A549 (cell line): ENCODE measurements at regions of chr11 and their contacts with region 1.

Region 1: DNA sequence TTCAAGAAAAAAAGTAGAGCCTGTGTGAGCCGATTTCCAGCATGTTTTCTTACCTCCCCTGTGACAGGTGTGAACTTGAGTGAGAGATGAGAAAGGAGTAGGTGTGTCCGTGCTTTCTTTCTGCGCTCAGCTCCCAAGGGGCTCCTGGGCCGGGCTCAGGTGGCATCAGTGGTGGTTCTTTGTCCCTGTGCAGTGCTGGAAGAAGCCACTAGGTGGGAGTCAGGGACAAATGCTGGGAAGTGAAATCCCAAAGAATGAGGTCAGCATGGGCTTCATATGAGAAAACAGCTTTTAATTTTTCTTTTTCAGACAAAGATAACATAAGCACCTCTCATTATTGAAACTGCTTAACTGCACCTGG is 57.8 kb downstream of the PPFIBP2 start:
- DNase-seq: peak; percentile 74 to 79
- ATAC-seq: peak; percentile 75 to 83
- H3K4me3 ChIP-seq: no peak overlapping the region
- H3K27ac ChIP-seq: peak overlapping the region; percentile 85 to 88
- H3K4me1 ChIP-seq: peaks cover 56% of the 10 kb centered on the region
- CTCF ChIP-seq: peak; percentile 98
- EP300 ChIP-seq: no peak
- POLR2A ChIP-seq: no peak
- RAD21 ChIP-seq: peak; percentile 98 to 99

Region 2: DNA sequence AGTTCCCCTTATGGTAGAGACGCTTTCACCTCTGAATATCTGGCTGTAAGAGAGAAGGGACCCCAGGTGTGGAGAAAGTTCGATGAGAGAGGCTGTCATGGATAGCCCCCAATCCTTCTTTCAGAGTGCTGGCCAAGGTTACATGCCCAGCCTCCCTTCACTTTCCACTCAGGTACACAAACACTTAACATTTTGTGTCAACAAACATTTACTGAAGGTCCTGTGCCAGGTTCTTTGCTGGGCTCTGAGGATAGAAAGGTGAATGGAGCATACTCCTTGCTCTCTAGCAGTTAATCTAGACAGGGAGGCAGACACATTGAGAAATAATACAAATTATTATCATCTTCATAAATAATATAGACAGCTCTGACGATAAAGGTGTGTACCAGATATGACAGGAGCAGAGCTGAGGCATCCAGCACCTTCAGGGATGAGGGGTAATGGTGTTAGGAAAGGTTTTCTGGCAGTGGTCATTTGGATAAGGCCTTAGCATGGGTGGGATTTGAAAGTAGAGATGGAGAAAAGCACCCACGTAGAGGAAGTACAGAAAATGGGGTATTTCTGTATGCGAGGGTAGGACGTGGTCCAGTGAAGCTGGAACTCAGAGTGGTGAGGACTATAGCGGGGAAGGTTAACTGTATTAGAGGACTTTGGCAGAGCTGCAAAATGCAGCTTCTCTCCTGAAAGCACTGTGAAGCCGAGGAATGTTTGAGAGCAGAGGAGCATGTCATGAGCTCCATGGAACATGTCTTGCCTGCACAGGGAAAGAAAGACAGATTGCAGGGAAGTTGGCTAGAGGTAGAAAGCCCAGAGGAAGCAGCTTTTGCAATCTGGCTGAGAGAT is 38.2 kb before region 1 on chr11:
- CTCF ChIA-PET with region 1: interaction called, 11 read pairs
- POLR2A ChIA-PET with region 1: no interaction called
- DNase-seq: no peak
- ATAC-seq: no peak
- H3K4me3 ChIP-seq: no peak overlapping the region
- H3K27ac ChIP-seq: no peak overlapping the region
- H3K4me1 ChIP-seq: no peaks in the 10 kb centered on the region
- CTCF ChIP-seq: no peak
- EP300 ChIP-seq: no peak
- POLR2A ChIP-seq: no peak
- RAD21 ChIP-seq: no peak

Region 3: DNA sequence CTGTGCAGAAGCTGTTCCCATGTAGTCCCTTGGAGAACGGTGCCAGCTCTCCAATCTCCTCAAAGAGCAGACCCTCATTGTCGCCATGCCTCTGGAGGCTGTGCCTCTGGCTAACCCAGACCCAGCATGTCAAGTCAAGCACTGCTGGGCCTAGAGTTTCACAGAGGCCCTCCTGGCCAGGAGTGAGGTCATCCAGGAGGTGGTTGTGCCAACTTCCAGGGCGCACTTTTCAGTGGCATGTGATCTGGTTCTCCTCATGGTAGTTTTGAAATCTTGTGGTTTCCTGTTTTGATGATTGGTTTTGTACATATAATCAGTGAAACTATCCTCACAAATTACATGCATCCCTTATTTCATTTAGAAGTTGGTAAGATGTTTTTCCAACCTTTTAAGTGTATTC is 21.1 kb after region 1 on chr11:
- CTCF ChIA-PET with region 1: interaction called, 23 read pairs
- POLR2A ChIA-PET with region 1: interaction called, 3 read pairs
- DNase-seq: no peak
- ATAC-seq: no peak
- H3K4me3 ChIP-seq: no peak overlapping the region
- H3K27ac ChIP-seq: no peak overlapping the region
- H3K4me1 ChIP-seq: peaks cover 12% of the 10 kb centered on the region; the same call in 2 of the 3 replicates
- CTCF ChIP-seq: no peak
- EP300 ChIP-seq: no peak
- POLR2A ChIP-seq: no peak
- RAD21 ChIP-seq: no peak

Region 4: DNA sequence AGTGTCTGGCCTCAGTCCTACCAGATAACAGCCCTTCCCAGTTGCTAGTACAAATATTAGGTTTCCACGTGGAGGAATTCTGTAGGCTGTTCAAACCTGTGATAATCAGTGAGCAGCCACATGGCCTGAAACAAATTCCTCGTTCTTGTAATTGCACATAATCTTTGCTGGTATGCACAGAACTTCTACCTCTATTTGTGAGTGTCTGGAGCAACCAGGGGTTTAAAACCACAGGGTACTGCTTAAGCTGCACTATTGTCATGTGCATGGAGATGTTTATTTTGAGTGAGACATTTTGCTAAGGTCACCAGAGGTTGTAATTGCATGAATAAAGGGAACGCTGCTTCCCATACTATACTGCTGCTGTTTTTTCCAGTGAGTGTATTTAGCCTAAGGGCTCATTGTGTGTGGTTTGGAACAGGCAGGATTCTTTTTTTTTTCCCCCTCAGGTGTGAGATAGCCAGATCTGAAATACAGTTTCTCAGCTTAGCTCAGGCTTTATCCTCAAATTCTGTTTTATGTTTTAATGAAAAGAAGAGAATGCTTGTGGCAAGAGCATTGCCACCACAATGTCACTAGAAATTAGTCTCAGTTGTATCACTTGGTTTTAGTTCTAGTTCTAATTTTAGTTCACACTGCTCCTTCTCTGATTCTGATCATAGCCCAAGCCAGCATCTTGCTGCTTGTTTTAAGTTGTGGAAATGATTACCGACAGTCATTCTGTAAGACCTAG is 41.2 kb after region 1 on chr11:
- CTCF ChIA-PET with region 1: interaction called, 26 read pairs
- POLR2A ChIA-PET with region 1: no interaction called
- DNase-seq: no peak
- ATAC-seq: peak; percentile 23 to 60; a peak in 4 of 6 replicates
- H3K4me3 ChIP-seq: no peak overlapping the region
- H3K27ac ChIP-seq: peak overlapping the region; percentile 27 to 46; a peak in 5 of 6 replicates
- H3K4me1 ChIP-seq: peaks cover 60% of the 10 kb centered on the region
- CTCF ChIP-seq: no peak
- EP300 ChIP-seq: no peak
- POLR2A ChIP-seq: no peak
- RAD21 ChIP-seq: no peak

Region 5: GRCh38 chr11:7645206-7645605 is 73.6 kb after region 1 on chr11:
- CTCF ChIA-PET with region 1: interaction called, 290 read pairs
- POLR2A ChIA-PET with region 1: no interaction called
- DNase-seq: no peak
- ATAC-seq: no peak
- H3K4me3 ChIP-seq: no peak overlapping the region
- H3K27ac ChIP-seq: no peak overlapping the region
- H3K4me1 ChIP-seq: 0 out of 3 replicates have a peak, but pooled peaks cover 3% of the 10 kb centered on the region
- CTCF ChIP-seq: no peak
- EP300 ChIP-seq: no peak
- POLR2A ChIP-seq: no peak
- RAD21 ChIP-seq: no peak

Region 6: DNA sequence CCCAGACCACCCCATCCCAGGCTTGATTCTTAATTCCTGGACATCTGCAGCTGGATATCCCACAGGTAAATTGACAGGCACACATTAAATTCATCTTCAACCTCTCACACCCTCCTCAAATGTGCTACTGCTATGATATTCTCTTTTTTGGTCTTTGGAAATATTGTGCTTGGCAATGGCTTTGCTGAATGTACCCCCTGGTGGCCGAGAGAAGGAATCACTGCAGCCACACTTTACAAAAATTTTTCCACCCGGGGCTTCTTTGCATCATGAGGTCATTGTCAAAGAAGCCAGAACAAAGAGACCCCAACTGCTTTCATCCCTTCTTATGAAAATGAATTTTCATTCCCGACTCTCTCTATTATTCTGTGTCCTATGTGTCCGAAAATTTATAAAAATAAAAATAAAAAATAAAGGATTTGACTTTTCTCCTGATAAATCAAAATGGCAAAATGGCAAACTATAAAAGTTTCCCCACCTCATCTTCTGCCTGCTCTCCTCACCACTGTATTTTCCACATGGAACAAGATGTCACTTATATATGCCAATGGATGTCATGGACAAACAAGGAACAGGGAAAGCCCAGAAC is 116.7 kb after region 1 on chr11:
- CTCF ChIA-PET with region 1: interaction called, 23 read pairs
- POLR2A ChIA-PET with region 1: no interaction called
- DNase-seq: peak; percentile 44 to 50
- ATAC-seq: peak; percentile 39 to 75; a peak in 3 of 6 replicates
- H3K4me3 ChIP-seq: no peak overlapping the region
- H3K27ac ChIP-seq: no peak overlapping the region
- H3K4me1 ChIP-seq: no peaks in the 10 kb centered on the region
- CTCF ChIP-seq: peak; percentile 74
- EP300 ChIP-seq: no peak
- POLR2A ChIP-seq: no peak
- RAD21 ChIP-seq: peak; percentile 66 to 69

Region 7: DNA sequence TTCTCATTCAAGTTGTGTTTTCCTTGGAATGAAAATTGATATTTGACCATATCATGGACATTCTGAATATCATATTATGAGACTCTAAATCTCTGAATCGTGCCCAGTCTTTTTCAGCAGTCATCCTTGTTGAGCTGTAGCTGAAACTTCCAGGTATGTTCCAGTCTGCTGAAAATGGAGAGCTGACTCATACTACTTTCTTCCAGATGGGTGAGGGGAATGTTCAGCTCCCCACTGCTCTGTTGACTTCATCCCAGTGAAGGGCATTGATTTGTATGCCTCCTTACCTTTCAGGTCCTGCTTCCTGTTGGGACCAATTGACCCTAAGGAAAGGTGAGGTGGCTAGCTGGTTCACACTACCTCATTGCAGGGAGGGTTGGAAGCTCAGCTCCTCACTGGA is 221.6 kb after region 1 on chr11:
- CTCF ChIA-PET with region 1: no interaction called
- POLR2A ChIA-PET with region 1: no interaction called
- DNase-seq: no peak
- ATAC-seq: no peak
- H3K4me3 ChIP-seq: no peak overlapping the region
- H3K27ac ChIP-seq: no peak overlapping the region
- H3K4me1 ChIP-seq: no peaks in the 10 kb centered on the region
- CTCF ChIP-seq: no peak
- EP300 ChIP-seq: no peak
- POLR2A ChIP-seq: no peak
- RAD21 ChIP-seq: no peak